Activated naive CD4-positive, alpha-beta T cell treated with anti-CD3 and anti-CD28 coated beads, Interleukin-2, amount 10 ng/mL, durations not matched to agents 7 days and 5 days (primary cell): ENCODE measurements at regions of chr19 and their contacts with region 1.

Region 1: GRCh38 chr19:16185123-16185767 is at the start of gene FAM32A:
- DNase-seq: peak; percentile 99
- H3K4me3 Mint-ChIP-seq: peak within 1 kb of the TSS; percentile 100
- H3K27ac Mint-ChIP-seq: peak within 1 kb of the TSS; percentile 97
- H3K4me1 Mint-ChIP-seq: peaks cover 40% of the 10 kb centered on the region
- H3K27me3 Mint-ChIP-seq: peaks cover 20% of the 10 kb centered on the region

Region 2: DNA sequence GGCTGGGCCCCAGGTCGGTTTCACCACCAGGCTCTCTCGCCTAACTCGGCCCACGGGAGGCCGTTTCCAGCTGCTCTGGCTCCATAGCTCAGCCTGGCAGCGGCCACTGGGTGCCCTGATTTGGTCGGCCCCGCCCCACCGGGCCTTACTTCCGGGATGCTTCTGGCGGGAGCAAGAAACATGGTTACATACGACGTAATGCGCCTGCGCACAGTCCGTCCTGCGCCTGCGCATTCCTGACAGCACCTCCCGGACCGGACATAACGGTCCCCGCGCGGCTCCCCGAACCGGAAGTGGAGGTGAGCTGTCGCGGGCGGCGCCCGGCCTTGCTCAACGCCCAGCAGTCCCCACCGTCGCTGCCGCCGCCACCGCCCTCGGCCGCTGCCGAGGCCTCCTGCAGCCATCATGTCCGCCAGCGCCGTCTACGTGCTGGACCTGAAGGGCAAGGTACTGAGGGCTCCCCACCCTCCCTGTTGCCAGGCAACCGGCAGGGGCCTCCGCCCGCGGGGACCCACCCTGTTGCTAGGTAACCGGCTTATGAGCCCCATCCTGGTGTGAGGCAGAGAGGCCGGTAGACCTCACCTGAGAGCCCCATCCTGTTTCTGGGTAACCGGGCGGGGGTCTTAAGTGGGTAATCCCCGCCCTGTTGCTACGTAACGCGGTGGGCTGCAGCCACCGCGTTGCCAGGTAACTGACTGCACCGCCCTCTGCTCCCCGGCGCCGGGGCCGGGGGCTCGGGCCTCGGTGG is 12.6 kb after region 1 on chr19 and contains the start of gene AP1M1:
- CTCF ChIA-PET with region 1: interaction called, 16 read pairs
- DNase-seq: peak; percentile 99
- H3K4me3 Mint-ChIP-seq: peak within 1 kb of the TSS; percentile 94
- H3K27ac Mint-ChIP-seq: peak within 1 kb of the TSS; percentile 92
- H3K4me1 Mint-ChIP-seq: peaks cover 44% of the 10 kb centered on the region
- H3K27me3 Mint-ChIP-seq: no peaks in the 10 kb centered on the region